IMR-90 (cell line): ENCODE measurements at regions of chr4 and their contacts with region 1.

Region 1: DNA sequence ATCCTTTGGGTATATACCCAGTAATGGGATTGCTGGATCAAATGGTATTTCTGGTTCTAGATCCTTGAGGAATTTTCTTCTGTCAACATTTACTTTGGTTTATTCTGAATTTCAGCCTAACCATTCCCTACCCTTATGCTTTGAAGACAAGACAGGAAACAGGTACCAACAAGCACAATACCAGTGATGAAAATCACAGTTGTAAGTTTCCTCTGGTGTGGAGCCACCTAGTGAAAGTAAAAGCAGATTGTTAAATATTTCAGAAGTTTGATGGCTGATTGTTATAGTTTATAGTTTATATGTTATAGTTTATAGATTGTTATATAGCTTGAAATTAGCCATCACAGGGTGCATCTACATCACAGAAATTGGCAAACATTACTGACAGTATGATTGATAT is 104.5 kb upstream of the AGA start:
- DNase-seq: peak; percentile 26
- ATAC-seq: no peak
- H3K4me3 ChIP-seq: no peak overlapping the region
- H3K27ac ChIP-seq: no peak overlapping the region
- H3K4me1 ChIP-seq: no peaks in the 10 kb centered on the region
- H3K27me3 ChIP-seq: no peaks in the 10 kb centered on the region
- CTCF ChIP-seq: peak; percentile 32; the same call in 1 of the 2 replicates
- POLR2A ChIP-seq: no peak
- RAD21 ChIP-seq: peak; percentile 34; the same call in 1 of the 2 replicates

Region 2: GRCh38 chr4:176357359-176358082 is 1189.2 kb before region 1 on chr4:
- CTCF ChIA-PET with region 1: no interaction called
- POLR2A ChIA-PET with region 1: no interaction called
- dilution Hi-C with region 1: no loop called
- in situ Hi-C with region 1: loop called (anchors 25 kb)
- intact Hi-C with region 1: no loop called
- DNase-seq: peak; percentile 39
- ATAC-seq: peak; percentile 38; the same call in 1 of the 2 replicates
- H3K4me3 ChIP-seq: no peak overlapping the region
- H3K27ac ChIP-seq: no peak overlapping the region
- H3K4me1 ChIP-seq: peaks cover 8% of the 10 kb centered on the region
- H3K27me3 ChIP-seq: no peaks in the 10 kb centered on the region
- CTCF ChIP-seq: no peak
- POLR2A ChIP-seq: no peak
- RAD21 ChIP-seq: no peak

Region 3: GRCh38 chr4:177376024-177376423 is 170.7 kb before region 1 on chr4:
- CTCF ChIA-PET with region 1: no interaction called
- POLR2A ChIA-PET with region 1: no interaction called
- dilution Hi-C with region 1: no loop called
- in situ Hi-C with region 1: no loop called
- intact Hi-C with region 1: loop called (anchors 10 kb)
- DNase-seq: no peak
- ATAC-seq: no peak
- H3K4me3 ChIP-seq: no peak overlapping the region
- H3K27ac ChIP-seq: no peak overlapping the region
- H3K4me1 ChIP-seq: no peaks in the 10 kb centered on the region; the same call in 1 of the 2 replicates
- H3K27me3 ChIP-seq: no peaks in the 10 kb centered on the region
- CTCF ChIP-seq: no peak
- POLR2A ChIP-seq: no peak
- RAD21 ChIP-seq: no peak

Region 4: GRCh38 chr4:177728361-177729152 is 181.8 kb after region 1 on chr4:
- CTCF ChIA-PET with region 1: no interaction called
- POLR2A ChIA-PET with region 1: no interaction called
- dilution Hi-C with region 1: no loop called
- in situ Hi-C with region 1: no loop called
- intact Hi-C with region 1: no loop called
- DNase-seq: no peak
- ATAC-seq: no peak
- H3K4me3 ChIP-seq: no peak overlapping the region
- H3K27ac ChIP-seq: no peak overlapping the region
- H3K4me1 ChIP-seq: no peaks in the 10 kb centered on the region; the same call in 1 of the 2 replicates
- H3K27me3 ChIP-seq: no peaks in the 10 kb centered on the region
- CTCF ChIP-seq: no peak
- POLR2A ChIP-seq: no peak
- RAD21 ChIP-seq: no peak